ENCODE measurements at regions of chr11 and their contacts with region 1.

Region 1: DNA sequence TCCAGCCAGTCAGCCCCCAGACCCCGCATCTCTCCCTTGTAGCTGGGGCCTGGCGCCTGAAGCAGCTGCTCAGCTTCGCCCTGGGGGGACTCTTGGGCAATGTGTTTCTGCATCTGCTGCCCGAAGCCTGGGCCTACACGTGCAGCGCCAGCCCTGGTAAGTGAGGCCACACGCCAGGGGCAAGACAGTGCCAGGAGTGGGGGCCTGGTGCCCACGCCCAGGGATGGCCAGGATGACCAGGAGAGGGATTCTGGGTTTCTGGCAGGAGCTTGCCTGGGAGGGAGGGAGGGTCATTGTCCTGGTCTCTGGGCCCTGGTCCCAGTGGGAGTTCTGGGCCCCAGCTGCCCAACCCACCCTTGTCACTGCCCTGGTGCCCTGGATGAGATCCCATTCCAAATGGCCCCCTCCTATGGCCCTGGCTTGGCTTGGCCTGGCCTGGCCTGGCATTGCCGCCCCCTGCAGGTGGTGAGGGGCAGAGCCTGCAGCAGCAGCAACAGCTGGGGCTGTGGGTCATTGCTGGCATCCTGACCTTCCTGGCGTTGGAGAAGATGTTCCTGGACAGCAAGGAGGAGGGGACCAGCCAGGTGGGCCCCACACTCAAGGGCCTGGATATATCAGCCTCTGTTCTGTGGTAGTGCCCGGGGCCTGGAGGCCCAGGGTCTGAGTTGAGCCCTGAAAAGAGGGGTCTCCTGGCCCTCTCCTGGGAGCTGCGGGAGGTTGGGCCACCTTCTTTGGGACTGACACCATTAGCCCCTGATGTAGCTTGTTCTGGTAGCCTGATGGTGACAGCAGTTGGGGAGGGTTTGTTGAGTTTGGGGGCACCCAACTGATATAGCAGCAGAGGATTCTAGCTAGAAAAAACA is 3.7 kb downstream of the SLC39A13 start:
- DNase-seq: peak; percentile 77
- ATAC-seq: no peak
- H3K4me3 Mint-ChIP-seq: no peak overlapping the region
- H3K27ac Mint-ChIP-seq: no peak overlapping the region
- H3K4me1 Mint-ChIP-seq: peaks cover 9% of the 10 kb centered on the region
- H3K27me3 Mint-ChIP-seq: no peaks in the 10 kb centered on the region

Region 2: DNA sequence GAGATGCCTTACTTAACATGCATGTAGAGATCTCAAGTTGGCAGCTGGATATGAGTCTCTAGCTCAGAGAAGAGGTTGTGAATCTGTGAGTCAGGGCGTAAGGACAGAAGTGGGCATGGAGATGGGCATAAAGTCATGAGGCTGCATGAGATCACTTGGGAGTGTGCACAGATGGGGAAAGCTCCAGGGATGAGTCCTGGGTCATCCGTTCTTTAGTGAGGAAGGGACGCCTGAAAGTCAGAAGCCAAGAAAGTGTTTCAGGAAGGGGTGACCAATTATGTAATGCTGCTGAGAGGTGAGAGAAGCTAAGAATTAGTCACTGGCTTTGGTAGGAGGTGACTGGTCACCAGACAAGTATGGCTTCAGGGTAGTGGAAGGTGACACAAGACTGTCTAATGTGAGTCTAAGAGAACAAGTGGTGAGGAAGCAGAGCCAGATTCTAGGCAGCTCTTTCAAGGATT is 170.2 kb before region 1 on chr11:
- POLR2A ChIA-PET with region 1: no interaction called
- DNase-seq: no peak
- ATAC-seq: peak; percentile 17
- H3K4me3 Mint-ChIP-seq: no peak overlapping the region
- H3K27ac Mint-ChIP-seq: peak overlapping the region; percentile 3
- H3K4me1 Mint-ChIP-seq: peaks cover 8% of the 10 kb centered on the region
- H3K27me3 Mint-ChIP-seq: no peaks in the 10 kb centered on the region

Region 3: GRCh38 chr11:47380069-47380468 is 32.0 kb before region 1 on chr11:
- POLR2A ChIA-PET with region 1: no interaction called
- DNase-seq: no peak
- ATAC-seq: no peak
- H3K4me3 Mint-ChIP-seq: no peak overlapping the region
- H3K27ac Mint-ChIP-seq: no peak overlapping the region
- H3K4me1 Mint-ChIP-seq: peaks cover 2% of the 10 kb centered on the region
- H3K27me3 Mint-ChIP-seq: peaks cover 6% of the 10 kb centered on the region

Region 4: DNA sequence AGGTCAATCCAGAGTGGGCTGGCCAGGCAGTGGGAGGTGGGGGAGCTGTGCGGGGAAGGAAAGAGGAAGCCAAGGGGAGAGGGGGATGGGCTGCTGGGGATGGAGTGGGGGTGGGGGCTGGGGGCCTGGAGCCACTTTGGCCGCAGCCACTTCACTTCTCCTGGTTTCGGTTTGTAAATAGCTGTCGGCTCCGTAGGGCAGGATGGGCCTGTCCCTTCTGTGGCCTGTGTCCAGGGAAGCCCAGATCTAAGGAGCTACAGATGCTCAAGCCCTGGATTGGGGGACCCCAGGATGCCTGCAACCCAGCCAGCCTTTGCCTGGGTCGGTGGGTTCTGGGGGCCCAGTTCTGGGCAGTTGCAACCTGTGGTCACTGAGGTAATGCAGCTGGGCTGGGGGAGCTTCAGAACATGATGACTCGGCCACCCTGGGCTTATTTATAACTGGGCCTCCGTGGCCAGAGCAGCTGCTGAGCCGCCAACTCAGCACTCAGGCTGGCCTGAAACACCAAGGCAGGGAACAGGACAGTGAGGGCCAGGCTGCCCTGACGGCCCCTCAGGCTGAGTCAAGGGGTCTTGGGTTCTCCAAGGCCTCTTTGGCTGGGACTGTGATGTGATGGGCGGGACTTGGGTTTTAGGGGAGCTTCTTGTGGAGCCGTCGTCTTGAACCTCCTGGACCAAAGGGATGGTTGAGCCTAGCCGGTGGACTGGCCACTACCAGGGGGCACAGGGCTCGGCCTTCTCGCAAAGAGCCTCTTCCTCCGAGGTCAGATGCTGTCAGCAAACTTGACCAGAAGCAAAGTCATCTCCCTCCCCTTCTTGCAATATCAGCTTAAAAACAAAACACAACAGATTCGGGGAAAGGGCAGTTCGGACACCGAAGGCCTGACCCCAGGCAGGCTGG is 18.7 kb before region 1 on chr11:
- POLR2A ChIA-PET with region 1: no interaction called
- DNase-seq: peak; percentile 34
- ATAC-seq: no peak
- H3K4me3 Mint-ChIP-seq: no peak overlapping the region
- H3K27ac Mint-ChIP-seq: peak overlapping the region; percentile 91
- H3K4me1 Mint-ChIP-seq: peaks cover 19% of the 10 kb centered on the region
- H3K27me3 Mint-ChIP-seq: peaks cover 3% of the 10 kb centered on the region

Region 5: GRCh38 chr11:47426061-47426956 is 14.2 kb after region 1 on chr11 and contains the start of gene PSMC3:
- POLR2A ChIA-PET with region 1: interaction called, 22 read pairs
- DNase-seq: peak; percentile 99
- ATAC-seq: peak; percentile 94
- H3K4me3 Mint-ChIP-seq: peak within 1 kb of the TSS; percentile 100
- H3K27ac Mint-ChIP-seq: peak within 1 kb of the TSS; percentile 99
- H3K4me1 Mint-ChIP-seq: peaks cover 18% of the 10 kb centered on the region
- H3K27me3 Mint-ChIP-seq: no peaks in the 10 kb centered on the region
- total RNA-seq, gene PSMC3: 113 to 115 TPM